Mammary epithelial cell (primary cell): ENCODE measurements at regions of chr15 and their contacts with region 1.

Region 1: GRCh38 chr15:58770857-58771620 is at the start of gene MINDY2:
- DNase-seq: peak; percentile 99
- H3K4me3 ChIP-seq: peak within 1 kb of the TSS; percentile 62 to 100 (median 73)
- H3K27ac ChIP-seq: peak within 1 kb of the TSS; percentile 83
- H3K4me1 ChIP-seq: peaks cover 14% of the 10 kb centered on the region
- H3K27me3 ChIP-seq: no peaks in the 10 kb centered on the region
- CTCF ChIP-seq: peak in 1 of 2 donors; percentile 47
- total RNA-seq, gene MINDY2: 17.5 to 30.7 TPM

Region 2: GRCh38 chr15:58269455-58270414 is 501.3 kb before region 1 on chr15:
- CTCF ChIA-PET with region 1: no interaction called
- dilution Hi-C with region 1: no loop called
- in situ Hi-C with region 1: no loop called
- intact Hi-C with region 1: loop called (anchors 2 kb)
- DNase-seq: peak; percentile 76
- H3K4me3 ChIP-seq: no peak overlapping the region
- H3K27ac ChIP-seq: peak overlapping the region; percentile 5
- H3K4me1 ChIP-seq: peaks cover 20% of the 10 kb centered on the region
- H3K27me3 ChIP-seq: no peaks in the 10 kb centered on the region
- CTCF ChIP-seq: peak; percentile 68 to 88

Region 3: GRCh38 chr15:58749532-58750337 is 21.3 kb before region 1 on chr15 and contains the start of gene ADAM10:
- CTCF ChIA-PET with region 1: interaction called, 16 read pairs
- dilution Hi-C with region 1: no loop called
- in situ Hi-C with region 1: no loop called
- intact Hi-C with region 1: loop called (anchors 1 kb)
- DNase-seq: peak; percentile 100
- H3K4me3 ChIP-seq: peak within 1 kb of the TSS; percentile 77 to 96 (median 90)
- H3K27ac ChIP-seq: peak within 1 kb of the TSS; percentile 89
- H3K4me1 ChIP-seq: peaks cover 10% of the 10 kb centered on the region
- H3K27me3 ChIP-seq: no peaks in the 10 kb centered on the region
- CTCF ChIP-seq: no peak
- total RNA-seq, gene ADAM10: 108 to 163 TPM

Region 4: DNA sequence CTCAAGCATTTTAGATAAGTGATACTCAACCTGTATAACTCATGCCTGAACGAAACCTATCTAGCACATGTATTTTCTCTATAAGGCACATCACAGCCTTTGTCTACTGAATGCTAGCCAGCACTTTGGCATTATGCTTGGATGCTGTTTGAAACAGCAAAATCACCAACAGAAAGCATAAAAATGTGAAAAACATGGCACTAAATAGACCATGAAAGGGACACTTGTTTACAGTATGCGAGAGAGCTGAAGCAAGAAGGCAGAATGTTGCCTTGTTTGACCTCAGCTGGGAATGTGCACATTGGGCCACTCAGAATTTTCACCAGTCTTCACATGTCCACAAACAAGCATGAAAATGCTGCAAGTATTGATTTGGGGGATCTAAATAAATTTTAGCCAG is 59.5 kb after region 1 on chr15:
- CTCF ChIA-PET with region 1: no interaction called
- dilution Hi-C with region 1: no loop called
- in situ Hi-C with region 1: no loop called
- intact Hi-C with region 1: loop called (anchors 2 kb)
- DNase-seq: no peak
- H3K4me3 ChIP-seq: no peak overlapping the region
- H3K27ac ChIP-seq: no peak overlapping the region
- H3K4me1 ChIP-seq: no peaks in the 10 kb centered on the region
- H3K27me3 ChIP-seq: no peaks in the 10 kb centered on the region
- CTCF ChIP-seq: no peak

Region 5: DNA sequence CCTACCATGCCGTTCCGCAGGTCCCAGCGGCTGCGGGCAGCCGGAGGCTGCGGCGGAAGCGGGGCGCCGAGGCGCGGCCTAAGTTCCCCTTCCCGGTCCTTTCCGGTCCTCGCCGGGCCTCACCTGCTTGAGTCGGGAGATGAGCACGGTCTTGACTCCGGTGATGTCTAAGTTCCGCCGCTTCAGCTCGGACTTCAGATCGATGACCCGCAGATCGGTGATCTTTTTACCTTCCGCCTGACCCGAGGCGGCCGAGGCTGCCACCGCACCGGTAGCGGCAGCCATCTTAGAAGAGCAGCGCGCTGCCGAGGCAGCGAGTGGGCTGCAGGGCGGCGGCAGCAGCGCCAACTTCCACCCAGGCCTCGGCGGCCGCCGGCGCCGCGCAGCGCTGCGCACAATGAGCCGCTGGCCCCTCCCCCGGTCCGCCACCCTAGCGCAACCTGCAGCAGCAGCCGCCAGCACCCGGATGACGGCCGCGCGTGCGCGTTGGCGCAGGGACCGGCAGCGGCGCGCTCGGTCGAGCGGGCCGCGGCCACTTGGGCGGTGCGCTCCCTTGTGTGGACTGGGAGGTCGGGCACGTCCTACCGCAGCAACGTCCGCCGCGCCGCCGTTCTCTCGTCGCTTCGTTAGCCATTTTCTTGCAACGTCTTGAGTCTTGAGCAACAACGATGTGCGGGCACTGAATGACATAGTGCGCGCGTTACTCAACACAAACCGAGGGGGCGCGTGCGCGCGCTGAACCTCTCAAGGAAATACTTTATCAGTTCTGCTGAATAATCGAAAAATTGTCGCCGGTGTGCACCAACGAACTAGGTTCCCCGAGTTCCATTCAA is 162.5 kb after region 1 on chr15 and contains the start of gene SLTM:
- CTCF ChIA-PET with region 1: no interaction called
- dilution Hi-C with region 1: no loop called
- in situ Hi-C with region 1: no loop called
- intact Hi-C with region 1: loop called (anchors 1 kb)
- DNase-seq: peak; percentile 96
- H3K4me3 ChIP-seq: peak within 1 kb of the TSS; percentile 73 to 98 (median 80)
- H3K27ac ChIP-seq: peak within 1 kb of the TSS; percentile 76
- H3K4me1 ChIP-seq: peaks cover 7% of the 10 kb centered on the region
- H3K27me3 ChIP-seq: no peaks in the 10 kb centered on the region
- CTCF ChIP-seq: peak in 1 of 2 donors; percentile 19
- total RNA-seq, gene SLTM: 46.5 to 69.1 TPM